CD14-positive monocyte (primary cell): ENCODE measurements at regions of chr19 and their contacts with region 1.

Region 1: DNA sequence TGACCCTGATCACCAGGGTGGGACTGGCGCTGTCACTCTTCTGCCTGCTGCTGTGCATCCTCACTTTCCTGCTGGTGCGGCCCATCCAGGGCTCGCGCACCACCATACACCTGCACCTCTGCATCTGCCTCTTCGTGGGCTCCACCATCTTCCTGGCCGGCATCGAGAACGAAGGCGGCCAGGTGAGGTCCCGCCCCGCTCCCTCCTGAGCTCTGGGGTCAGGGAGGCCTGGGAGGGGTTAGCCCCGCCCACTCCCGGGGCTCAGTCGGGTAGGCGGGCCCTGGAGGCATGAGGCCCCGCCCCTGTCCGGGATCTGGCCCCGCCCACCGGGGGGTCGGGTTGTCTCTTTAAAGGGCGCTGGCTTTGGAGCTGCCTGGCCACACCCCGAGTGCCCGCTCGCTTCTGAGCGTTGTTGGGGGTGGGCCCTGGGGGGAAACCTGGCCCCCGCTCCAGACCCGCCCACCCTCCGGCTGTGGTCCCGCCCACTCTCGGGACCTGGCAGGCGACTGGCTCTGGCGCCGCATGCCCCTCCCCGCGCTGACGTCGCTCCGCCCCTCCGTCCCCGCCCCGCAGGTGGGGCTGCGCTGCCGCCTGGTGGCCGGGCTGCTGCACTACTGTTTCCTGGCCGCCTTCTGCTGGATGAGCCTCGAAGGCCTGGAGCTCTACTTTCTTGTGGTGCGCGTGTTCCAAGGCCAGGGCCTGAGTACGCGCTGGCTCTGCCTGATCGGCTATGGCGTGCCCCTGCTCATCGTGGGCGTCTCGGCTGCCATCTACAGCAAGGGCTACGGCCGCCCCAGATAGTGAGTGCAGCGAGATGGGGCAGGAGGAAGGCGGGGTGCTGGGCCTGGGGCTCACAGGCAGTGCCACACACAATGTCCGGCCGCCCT is 13.1 kb downstream of the DDX39A start:
- DNase-seq: peak; percentile 82 to 89 (median 87)
- H3K4me3 ChIP-seq: peak overlapping the region in 1 of 3 experiments; percentile 48
- H3K4me3 Mint-ChIP-seq: peak overlapping the region; percentile 47 to 53
- H3K27ac ChIP-seq: peak overlapping the region; percentile 45 to 52
- H3K27ac Mint-ChIP-seq: peak overlapping the region; percentile 10 to 86 (median 79)
- H3K4me1 ChIP-seq: peaks cover 22 to 26% of the 10 kb centered on the region in 2 donors
- H3K4me1 Mint-ChIP-seq: peaks cover 21% of the 10 kb centered on the region
- H3K27me3 ChIP-seq: no peaks in the 10 kb centered on the region
- H3K27me3 Mint-ChIP-seq: peaks cover 0 to 2% (median 0%) of the 10 kb centered on the region in 3 donors
- CTCF ChIP-seq: peak; percentile 96

Region 2: DNA sequence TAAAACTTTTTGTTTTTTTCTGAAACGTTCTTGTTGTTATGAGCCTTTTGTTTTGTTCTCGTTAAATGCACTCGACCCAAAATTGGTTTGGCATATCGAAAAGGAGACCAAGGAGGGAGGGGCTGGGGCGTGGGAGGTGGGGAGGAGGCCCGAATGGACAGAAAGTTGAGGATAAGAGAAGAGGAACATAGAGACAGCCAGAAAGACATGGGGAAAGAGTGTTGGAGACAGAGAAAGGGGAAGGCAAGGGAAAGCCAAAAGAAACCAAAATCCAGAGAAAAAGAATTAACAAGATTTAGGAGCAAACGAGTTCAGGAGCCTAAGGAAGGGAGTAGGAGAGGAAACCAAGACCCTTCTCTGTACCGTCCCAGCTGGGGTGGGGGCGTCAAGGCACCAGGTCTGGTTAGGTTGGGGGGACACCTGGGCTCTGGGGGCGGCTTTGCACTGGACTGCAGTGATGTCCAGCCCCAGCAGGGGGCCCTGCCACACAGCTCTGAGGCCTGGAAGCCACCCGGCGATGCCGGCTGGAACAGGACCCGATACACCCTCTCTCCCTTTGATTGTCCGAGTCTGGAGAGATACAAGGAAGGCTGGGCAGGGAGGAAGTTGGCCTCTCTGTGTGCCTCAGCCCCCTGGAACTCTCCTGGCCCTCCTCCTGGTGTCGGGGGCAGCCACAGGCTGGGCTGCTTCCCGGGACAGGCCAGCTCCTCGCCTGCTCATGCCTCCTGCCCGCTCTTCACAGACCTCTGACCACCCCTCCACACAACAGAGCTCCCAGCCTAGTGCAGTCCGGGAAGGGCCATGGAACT is 258.0 kb before region 1 on chr19:
- intact Hi-C with region 1: loop called in 1 of 2 experiments (anchors 10 kb)
- DNase-seq: peak; percentile 45 to 64 (median 58)
- H3K4me3 ChIP-seq: peak overlapping the region in 1 of 3 experiments; percentile 68
- H3K4me3 Mint-ChIP-seq: peak overlapping the region; percentile 17 to 83
- H3K27ac ChIP-seq: no peak overlapping the region
- H3K27ac Mint-ChIP-seq: peak overlapping the region in 5 of 7 donors; percentile 31 to 83 (median 72)
- H3K4me1 ChIP-seq: peaks cover 30 to 36% of the 10 kb centered on the region in 2 donors
- H3K4me1 Mint-ChIP-seq: peaks cover 60% of the 10 kb centered on the region
- H3K27me3 ChIP-seq: no peaks in the 10 kb centered on the region
- H3K27me3 Mint-ChIP-seq: peaks cover 0 to 5% (median 1%) of the 10 kb centered on the region in 3 donors
- CTCF ChIP-seq: peak; percentile 89